Activated CD8-positive, alpha-beta T cell treated with anti-CD3 and anti-CD28 coated beads for 36 hours (primary cell): ENCODE measurements at regions of chr15 and their contacts with region 1.

Region 1: DNA sequence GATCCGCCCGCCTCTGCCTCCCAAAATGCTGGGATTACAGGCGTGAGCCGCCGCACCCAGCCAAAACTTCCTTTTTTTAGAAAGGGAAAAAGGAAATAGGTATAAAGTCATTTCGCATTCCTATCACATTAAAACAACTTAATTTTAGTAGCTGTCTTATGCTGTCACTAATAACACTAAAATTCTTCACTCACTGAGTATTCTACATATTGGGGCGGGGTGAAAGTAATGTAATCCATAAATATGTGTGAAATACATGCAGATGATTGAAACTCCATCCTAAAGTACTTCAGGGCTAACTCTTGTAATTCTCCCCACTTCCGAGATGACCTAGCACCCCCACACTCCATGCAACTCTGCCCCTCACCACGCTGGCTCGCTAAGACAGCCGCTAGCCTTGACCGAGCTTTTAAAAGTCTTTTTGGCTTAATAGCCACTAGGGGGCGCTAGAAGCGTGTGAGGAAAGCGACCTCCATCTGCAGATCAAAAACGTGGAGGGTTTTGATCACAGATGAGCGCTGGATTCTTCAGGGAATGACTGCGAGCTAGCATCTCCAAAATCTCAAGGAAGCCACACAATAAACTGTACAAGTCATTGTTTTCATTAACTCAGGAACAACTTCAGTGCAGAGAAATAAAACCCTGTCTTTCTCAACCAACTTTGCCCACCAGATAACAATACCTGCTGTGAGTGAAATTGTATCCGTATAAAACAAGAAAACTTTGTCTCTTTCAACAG is 129.3 kb upstream of the IGF1R start:
- DNase-seq: peak; percentile 66
- ATAC-seq: peak; percentile 83
- H3K4me3 Mint-ChIP-seq: no peak overlapping the region
- H3K27ac Mint-ChIP-seq: no peak overlapping the region
- H3K4me1 Mint-ChIP-seq: no peaks in the 10 kb centered on the region
- H3K27me3 Mint-ChIP-seq: peaks cover 2% of the 10 kb centered on the region
- CTCF ChIP-seq: peak; percentile 64

Region 2: GRCh38 chr15:98330692-98331435 is 188.1 kb before region 1 on chr15:
- CTCF ChIA-PET with region 1: no interaction called
- POLR2A ChIA-PET with region 1: no interaction called
- intact Hi-C with region 1: no loop called
- DNase-seq: no peak
- ATAC-seq: no peak
- H3K4me3 Mint-ChIP-seq: no peak overlapping the region
- H3K27ac Mint-ChIP-seq: no peak overlapping the region
- H3K4me1 Mint-ChIP-seq: no peaks in the 10 kb centered on the region
- H3K27me3 Mint-ChIP-seq: peaks cover 5% of the 10 kb centered on the region
- CTCF ChIP-seq: no peak

Region 3: GRCh38 chr15:98529205-98530145 is 10.5 kb after region 1 on chr15:
- CTCF ChIA-PET with region 1: interaction called, 13 read pairs
- POLR2A ChIA-PET with region 1: no interaction called
- intact Hi-C with region 1: no loop called
- DNase-seq: no peak
- ATAC-seq: no peak
- H3K4me3 Mint-ChIP-seq: no peak overlapping the region
- H3K27ac Mint-ChIP-seq: no peak overlapping the region
- H3K4me1 Mint-ChIP-seq: no peaks in the 10 kb centered on the region
- H3K27me3 Mint-ChIP-seq: peaks cover 8% of the 10 kb centered on the region
- CTCF ChIP-seq: no peak

Region 4: DNA sequence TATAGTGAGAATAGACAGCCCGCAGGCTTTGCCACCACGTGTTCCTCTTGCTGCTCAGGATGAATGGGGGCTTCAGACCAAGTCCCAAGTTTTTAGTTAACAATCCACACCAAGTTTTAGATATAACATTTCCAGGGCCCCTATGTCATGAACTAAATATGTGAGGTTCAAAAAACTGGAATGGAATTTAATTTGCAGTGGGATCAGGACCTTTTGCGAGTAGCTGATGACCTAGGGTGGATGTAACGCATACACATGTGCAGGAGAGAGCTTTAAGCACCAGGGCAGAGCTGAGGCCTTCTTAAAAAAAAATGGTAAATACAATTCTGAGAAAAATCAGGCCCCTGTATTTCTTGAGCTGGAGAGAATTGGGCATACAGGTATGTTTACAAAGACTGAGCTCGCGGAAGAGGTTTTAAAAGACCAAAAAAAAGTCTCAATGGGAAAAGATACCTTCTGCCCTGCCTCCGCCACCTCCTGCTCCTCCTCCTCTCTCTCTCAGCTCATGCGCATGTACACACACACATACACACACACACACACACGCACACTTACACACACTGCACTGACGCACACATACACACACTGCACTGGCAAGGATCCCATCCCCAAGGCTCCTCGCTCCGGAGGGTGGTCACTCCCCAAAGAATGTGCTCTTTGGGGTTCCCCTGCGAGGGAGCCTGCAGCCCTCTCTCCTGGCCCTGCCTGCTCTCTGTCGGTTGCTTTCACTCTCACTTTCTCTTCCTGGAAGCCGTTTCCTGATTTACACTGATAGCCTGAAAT is 81.1 kb after region 1 on chr15:
- CTCF ChIA-PET with region 1: interaction called, 13 read pairs
- POLR2A ChIA-PET with region 1: no interaction called
- intact Hi-C with region 1: no loop called
- DNase-seq: peak; percentile 60
- ATAC-seq: peak; percentile 90
- H3K4me3 Mint-ChIP-seq: peak overlapping the region; percentile 90
- H3K27ac Mint-ChIP-seq: peak overlapping the region; percentile 98
- H3K4me1 Mint-ChIP-seq: peaks cover 15% of the 10 kb centered on the region
- H3K27me3 Mint-ChIP-seq: no peaks in the 10 kb centered on the region
- CTCF ChIP-seq: no peak

Region 5: GRCh38 chr15:98647774-98648653 is 129.0 kb after region 1 on chr15 and contains the start of gene IGF1R:
- CTCF ChIA-PET with region 1: interaction called, 28 read pairs
- POLR2A ChIA-PET with region 1: no interaction called
- intact Hi-C with region 1: no loop called
- DNase-seq: peak; percentile 83
- ATAC-seq: peak; percentile 74
- H3K4me3 Mint-ChIP-seq: peak within 1 kb of the TSS; percentile 93
- H3K27ac Mint-ChIP-seq: peak within 1 kb of the TSS; percentile 90
- H3K4me1 Mint-ChIP-seq: peaks cover 23% of the 10 kb centered on the region
- H3K27me3 Mint-ChIP-seq: peaks cover 15% of the 10 kb centered on the region
- CTCF ChIP-seq: no peak
- total RNA-seq, gene IGF1R: 22.8 to 24.7 TPM

Region 6: DNA sequence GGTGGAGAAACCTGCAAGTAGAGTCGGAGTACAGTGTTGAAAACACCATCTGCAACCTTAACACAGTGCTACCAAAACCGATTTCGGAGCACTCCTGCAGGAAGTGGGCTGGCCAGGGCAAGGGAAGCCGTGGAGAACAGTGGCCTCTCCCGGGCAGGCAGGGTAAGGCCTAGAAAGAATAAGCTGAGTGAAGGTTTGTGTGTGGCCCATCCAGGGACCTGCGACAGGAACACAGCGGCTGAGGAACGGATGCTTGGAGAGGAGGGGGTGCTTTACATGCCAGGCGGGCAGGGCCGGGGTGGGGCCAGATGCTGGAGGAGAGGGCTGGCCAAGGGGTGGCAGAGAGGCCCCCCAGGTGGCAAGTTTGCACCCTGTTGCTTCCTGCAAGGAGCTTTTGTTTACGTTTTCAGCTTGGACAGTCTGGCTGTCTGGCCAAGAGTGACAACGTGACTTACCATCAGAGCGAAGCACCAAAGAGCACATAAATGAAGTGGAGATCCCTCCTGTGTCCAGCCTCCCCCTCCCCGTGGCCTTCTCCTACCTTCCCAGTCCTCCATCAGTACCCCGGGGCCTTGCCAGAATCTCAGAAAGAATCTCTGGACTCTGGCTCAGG is 332.1 kb after region 1 on chr15:
- CTCF ChIA-PET with region 1: interaction called, 13 read pairs
- POLR2A ChIA-PET with region 1: no interaction called
- intact Hi-C with region 1: no loop called
- DNase-seq: peak; percentile 83
- ATAC-seq: peak; percentile 61
- H3K4me3 Mint-ChIP-seq: peak overlapping the region; percentile 79
- H3K27ac Mint-ChIP-seq: peak overlapping the region; percentile 82
- H3K4me1 Mint-ChIP-seq: peaks cover 44% of the 10 kb centered on the region
- H3K27me3 Mint-ChIP-seq: no peaks in the 10 kb centered on the region
- CTCF ChIP-seq: peak; percentile 71

Region 7: GRCh38 chr15:99076552-99077308 is 557.7 kb after region 1 on chr15:
- CTCF ChIA-PET with region 1: interaction called, 14 read pairs
- POLR2A ChIA-PET with region 1: no interaction called
- intact Hi-C with region 1: no loop called
- DNase-seq: peak; percentile 47
- ATAC-seq: peak; percentile 80
- H3K4me3 Mint-ChIP-seq: peak overlapping the region; percentile 69
- H3K27ac Mint-ChIP-seq: no peak overlapping the region
- H3K4me1 Mint-ChIP-seq: peaks cover 5% of the 10 kb centered on the region
- H3K27me3 Mint-ChIP-seq: no peaks in the 10 kb centered on the region
- CTCF ChIP-seq: peak; percentile 74